ENCODE measurements at regions of chr2 and their contacts with region 1.

Region 1: DNA sequence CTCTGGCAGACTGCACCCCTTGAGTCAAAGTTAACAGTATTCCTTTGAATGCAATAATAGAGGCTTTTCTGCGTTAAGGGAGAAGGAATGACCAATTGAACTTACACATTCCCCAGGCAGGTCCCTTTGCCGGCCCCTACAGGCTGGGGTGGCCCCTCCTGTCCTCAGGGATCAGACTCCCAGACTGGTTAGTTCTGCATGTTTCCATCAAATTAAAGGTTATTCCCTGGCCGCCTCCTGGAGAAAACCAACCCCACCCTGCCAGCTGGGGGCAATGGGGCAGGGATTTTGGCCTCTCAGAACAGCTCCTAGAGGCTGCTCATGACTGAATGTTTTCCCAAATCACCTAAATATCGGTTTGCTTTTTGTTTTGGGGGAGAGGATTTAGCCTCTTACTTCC is 199.6 kb downstream of the MGAT5 start:
- DNase-seq: no peak
- ATAC-seq: no peak
- H3K4me3 ChIP-seq: no peak overlapping the region
- H3K27ac ChIP-seq: no peak overlapping the region
- H3K4me1 ChIP-seq: peaks cover 41% of the 10 kb centered on the region
- H3K27me3 ChIP-seq: no peaks in the 10 kb centered on the region
- CTCF ChIP-seq: no peak
- EP300 ChIP-seq: no peak
- POLR2A ChIP-seq: no peak
- RAD21 ChIP-seq: no peak

Region 2: GRCh38 chr2:134375935-134376334 is 77.5 kb before region 1 on chr2:
- CTCF ChIA-PET with region 1: interaction called, 52 read pairs
- POLR2A ChIA-PET with region 1: interaction called, 5 read pairs
- in situ Hi-C with region 1: no loop called
- intact Hi-C with region 1: loop called (anchors 1 kb)
- DNase-seq: peak; percentile 75
- ATAC-seq: peak; percentile 97
- H3K4me3 ChIP-seq: no peak overlapping the region
- H3K27ac ChIP-seq: no peak overlapping the region
- H3K4me1 ChIP-seq: peaks cover 17% of the 10 kb centered on the region
- H3K27me3 ChIP-seq: no peaks in the 10 kb centered on the region
- CTCF ChIP-seq: peak; percentile 84
- EP300 ChIP-seq: peak in 1 of 2 experiments; percentile 45; a peak in 1 of 4 replicates
- POLR2A ChIP-seq: no peak
- RAD21 ChIP-seq: peak; percentile 76

Region 3: GRCh38 chr2:134391751-134392160 is 61.7 kb before region 1 on chr2:
- CTCF ChIA-PET with region 1: interaction called, 23 read pairs
- POLR2A ChIA-PET with region 1: no interaction called
- in situ Hi-C with region 1: no loop called
- intact Hi-C with region 1: loop called (anchors 1 kb)
- DNase-seq: no peak
- ATAC-seq: no peak
- H3K4me3 ChIP-seq: no peak overlapping the region
- H3K27ac ChIP-seq: no peak overlapping the region
- H3K4me1 ChIP-seq: peaks cover 13% of the 10 kb centered on the region
- H3K27me3 ChIP-seq: no peaks in the 10 kb centered on the region
- CTCF ChIP-seq: no peak
- EP300 ChIP-seq: no peak
- POLR2A ChIP-seq: no peak
- RAD21 ChIP-seq: no peak

Region 4: DNA sequence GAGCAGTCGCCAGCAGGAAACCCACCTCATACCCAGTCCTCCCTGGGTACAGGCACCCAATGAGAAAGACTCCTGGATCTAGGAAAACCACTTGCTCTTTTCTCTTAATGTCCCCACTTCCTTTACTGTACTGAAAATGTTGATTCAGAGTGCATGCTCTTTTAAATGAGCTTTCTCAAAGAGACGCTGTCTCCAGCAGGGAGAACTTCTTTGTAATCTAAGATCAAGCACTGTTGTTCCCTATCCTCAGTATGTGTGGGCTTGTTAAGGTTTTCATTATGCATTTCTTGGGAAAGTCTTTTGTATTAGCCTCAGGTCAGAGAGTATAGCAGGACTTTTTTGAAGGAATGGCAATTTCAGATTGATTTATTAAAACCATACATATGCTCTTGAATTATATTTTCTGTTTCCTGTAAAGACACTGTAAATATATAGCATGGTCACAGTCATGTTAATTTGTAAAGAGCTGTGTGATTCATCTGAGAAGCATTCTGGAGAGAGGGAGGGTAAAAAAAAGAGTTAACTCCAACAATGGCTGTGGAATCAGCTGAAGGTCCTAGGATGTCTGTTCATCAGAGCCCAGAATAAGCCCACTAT is 21.5 kb before region 1 on chr2:
- CTCF ChIA-PET with region 1: interaction called, 8 read pairs
- POLR2A ChIA-PET with region 1: interaction called, 5 read pairs
- in situ Hi-C with region 1: no loop called
- intact Hi-C with region 1: loop called (anchors 2 kb)
- DNase-seq: no peak
- ATAC-seq: peak; percentile 11
- H3K4me3 ChIP-seq: no peak overlapping the region; a peak in 1 of 6 replicates
- H3K27ac ChIP-seq: peak overlapping the region; percentile 56
- H3K4me1 ChIP-seq: peaks cover 65% of the 10 kb centered on the region
- H3K27me3 ChIP-seq: no peaks in the 10 kb centered on the region
- CTCF ChIP-seq: no peak
- EP300 ChIP-seq: no peak
- POLR2A ChIP-seq: no peak
- RAD21 ChIP-seq: no peak

Region 5: GRCh38 chr2:134549104-134549503 is 95.6 kb after region 1 on chr2:
- CTCF ChIA-PET with region 1: no interaction called
- POLR2A ChIA-PET with region 1: no interaction called
- in situ Hi-C with region 1: no loop called
- intact Hi-C with region 1: no loop called
- DNase-seq: no peak
- ATAC-seq: no peak
- H3K4me3 ChIP-seq: no peak overlapping the region
- H3K27ac ChIP-seq: no peak overlapping the region
- H3K4me1 ChIP-seq: no peaks in the 10 kb centered on the region
- H3K27me3 ChIP-seq: peaks cover 3 to 25% of the 10 kb centered on the region in 2 experiments; a peak in 4 of 5 replicates
- CTCF ChIP-seq: no peak
- EP300 ChIP-seq: no peak
- POLR2A ChIP-seq: no peak
- RAD21 ChIP-seq: no peak

Measured in HepG2 (cell line).